ENCODE measurements at regions of chr17 and their contacts with region 1.

Region 1: GRCh38 chr17:1628856-1629646 is 417 bp upstream of the SLC43A2 start:
- DNase-seq: peak; percentile 96
- ATAC-seq: peak; percentile 64
- H3K4me3 ChIP-seq: peak overlapping the region; percentile 52 to 97 (median 92)
- H3K4me3 Mint-ChIP-seq: peak overlapping the region; percentile 93
- H3K27ac ChIP-seq: peak overlapping the region; percentile 94 to 97
- H3K27ac Mint-ChIP-seq: peak overlapping the region; percentile 98
- H3K4me1 ChIP-seq: peaks cover 49 to 57% of the 10 kb centered on the region in 2 donors
- H3K4me1 Mint-ChIP-seq: peaks cover 49% of the 10 kb centered on the region
- H3K27me3 ChIP-seq: no peaks in the 10 kb centered on the region
- H3K27me3 Mint-ChIP-seq: no peaks in the 10 kb centered on the region
- CTCF ChIP-seq: peak; percentile 36

Region 2: GRCh38 chr17:1561400-1562175 is 67.5 kb before region 1 on chr17:
- CTCF ChIA-PET with region 1: interaction called, 8 read pairs
- POLR2A ChIA-PET with region 1: interaction called, 17 read pairs
- intact Hi-C with region 1: loop called (anchors 1 kb)
- DNase-seq: peak; percentile 67
- ATAC-seq: peak; percentile 37
- H3K4me3 ChIP-seq: peak overlapping the region; percentile 8 to 72 (median 64)
- H3K4me3 Mint-ChIP-seq: peak overlapping the region; percentile 89
- H3K27ac ChIP-seq: peak overlapping the region in 1 of 2 donors; percentile 78
- H3K27ac Mint-ChIP-seq: peak overlapping the region; percentile 78
- H3K4me1 ChIP-seq: peaks cover 20 to 29% of the 10 kb centered on the region in 2 donors
- H3K4me1 Mint-ChIP-seq: peaks cover 39% of the 10 kb centered on the region
- H3K27me3 ChIP-seq: no peaks in the 10 kb centered on the region
- H3K27me3 Mint-ChIP-seq: no peaks in the 10 kb centered on the region
- CTCF ChIP-seq: peak; percentile 36

Region 3: GRCh38 chr17:1590031-1590748 is 38.9 kb before region 1 on chr17:
- CTCF ChIA-PET with region 1: interaction called, 11 read pairs
- POLR2A ChIA-PET with region 1: interaction called, 67 read pairs
- intact Hi-C with region 1: loop called (anchors 1 kb)
- DNase-seq: no peak
- ATAC-seq: no peak
- H3K4me3 ChIP-seq: no peak overlapping the region
- H3K4me3 Mint-ChIP-seq: no peak overlapping the region
- H3K27ac ChIP-seq: no peak overlapping the region
- H3K27ac Mint-ChIP-seq: peak overlapping the region; percentile 74
- H3K4me1 ChIP-seq: peaks cover 24 to 35% of the 10 kb centered on the region in 2 donors
- H3K4me1 Mint-ChIP-seq: peaks cover 27% of the 10 kb centered on the region
- H3K27me3 ChIP-seq: no peaks in the 10 kb centered on the region
- H3K27me3 Mint-ChIP-seq: no peaks in the 10 kb centered on the region
- CTCF ChIP-seq: no peak

Region 4: GRCh38 chr17:1643293-1643998 is 14.4 kb after region 1 on chr17:
- CTCF ChIA-PET with region 1: interaction called, 135 read pairs
- POLR2A ChIA-PET with region 1: interaction called, 77 read pairs
- intact Hi-C with region 1: no loop called
- DNase-seq: peak; percentile 74
- ATAC-seq: peak; percentile 39
- H3K4me3 ChIP-seq: peak overlapping the region in 4 of 5 experiments; percentile 19 to 66 (median 46)
- H3K4me3 Mint-ChIP-seq: peak overlapping the region; percentile 91
- H3K27ac ChIP-seq: no peak overlapping the region
- H3K27ac Mint-ChIP-seq: no peak overlapping the region
- H3K4me1 ChIP-seq: peaks cover 28 to 32% of the 10 kb centered on the region in 2 donors
- H3K4me1 Mint-ChIP-seq: peaks cover 30% of the 10 kb centered on the region
- H3K27me3 ChIP-seq: peaks cover 0 to 3% (median 0%) of the 10 kb centered on the region in 4 experiments
- H3K27me3 Mint-ChIP-seq: no peaks in the 10 kb centered on the region
- CTCF ChIP-seq: peak; percentile 32

Region 5: DNA sequence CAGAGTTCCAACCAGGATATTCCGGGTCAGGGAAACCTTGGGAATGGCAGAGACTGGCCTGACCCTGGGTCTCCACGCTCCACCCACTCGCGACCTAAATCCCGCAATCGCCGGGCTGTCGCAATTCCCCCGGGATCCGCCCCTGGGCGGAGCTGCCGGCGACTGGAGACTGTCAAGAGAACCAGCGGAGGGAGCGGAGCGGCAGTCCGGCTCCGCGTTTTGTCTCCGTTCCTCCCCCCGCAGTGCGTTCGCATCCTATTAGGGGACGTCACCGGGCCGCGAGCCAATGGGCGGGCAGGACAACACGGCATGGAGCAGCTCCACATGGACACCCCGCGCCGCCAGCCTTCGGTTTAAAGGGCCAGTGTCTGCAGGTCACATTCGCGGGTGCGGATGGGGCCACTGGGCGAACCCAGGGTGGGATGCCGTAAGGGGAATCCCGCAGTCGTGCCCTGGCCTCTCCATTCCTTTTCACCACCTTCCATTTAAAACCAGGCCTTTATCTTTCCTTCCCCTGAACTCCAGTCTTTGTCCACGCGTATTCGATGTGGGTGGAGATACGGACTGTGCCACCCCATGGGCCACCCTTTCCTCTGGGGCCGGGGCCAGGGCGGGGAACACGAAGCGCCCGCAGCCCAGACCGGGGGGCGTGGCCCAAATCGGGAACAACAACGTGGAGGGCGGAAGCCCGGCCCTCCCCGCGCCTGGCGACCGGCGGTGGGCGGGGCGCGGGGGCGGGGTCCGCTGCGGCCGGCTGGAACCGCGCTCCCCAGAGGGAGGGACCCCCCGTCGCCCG is 772.6 kb after region 1 on chr17:
- CTCF ChIA-PET with region 1: no interaction called
- POLR2A ChIA-PET with region 1: no interaction called
- intact Hi-C with region 1: loop called (anchors 5 kb)
- DNase-seq: peak; percentile 96
- ATAC-seq: peak; percentile 57
- H3K4me3 ChIP-seq: peak overlapping the region; percentile 64 to 99 (median 94)
- H3K4me3 Mint-ChIP-seq: peak overlapping the region; percentile 99
- H3K27ac ChIP-seq: peak overlapping the region; percentile 95 to 98
- H3K27ac Mint-ChIP-seq: peak overlapping the region; percentile 99
- H3K4me1 ChIP-seq: peaks cover 32 to 36% of the 10 kb centered on the region in 2 donors
- H3K4me1 Mint-ChIP-seq: peaks cover 38% of the 10 kb centered on the region
- H3K27me3 ChIP-seq: no peaks in the 10 kb centered on the region
- H3K27me3 Mint-ChIP-seq: no peaks in the 10 kb centered on the region
- CTCF ChIP-seq: no peak

Region 6: GRCh38 chr17:3535253-3535995 is 1906.4 kb after region 1 on chr17:
- CTCF ChIA-PET with region 1: no interaction called
- POLR2A ChIA-PET with region 1: no interaction called
- intact Hi-C with region 1: no loop called
- DNase-seq: peak; percentile 77
- ATAC-seq: peak; percentile 95
- H3K4me3 ChIP-seq: peak overlapping the region in 4 of 5 experiments; percentile 12 to 48 (median 30)
- H3K4me3 Mint-ChIP-seq: peak overlapping the region; percentile 70
- H3K27ac ChIP-seq: no peak overlapping the region
- H3K27ac Mint-ChIP-seq: peak overlapping the region; percentile 32
- H3K4me1 ChIP-seq: peaks cover 6 to 15% of the 10 kb centered on the region in 2 donors
- H3K4me1 Mint-ChIP-seq: peaks cover 19% of the 10 kb centered on the region
- H3K27me3 ChIP-seq: peaks cover 0 to 7% (median 0%) of the 10 kb centered on the region in 4 experiments
- H3K27me3 Mint-ChIP-seq: no peaks in the 10 kb centered on the region
- CTCF ChIP-seq: peak; percentile 71